Activated naive CD4-positive, alpha-beta T cell treated with anti-CD3 and anti-CD28 coated beads for 36 hours (primary cell): ENCODE measurements at regions of chr3 and their contacts with region 1.

Region 1: DNA sequence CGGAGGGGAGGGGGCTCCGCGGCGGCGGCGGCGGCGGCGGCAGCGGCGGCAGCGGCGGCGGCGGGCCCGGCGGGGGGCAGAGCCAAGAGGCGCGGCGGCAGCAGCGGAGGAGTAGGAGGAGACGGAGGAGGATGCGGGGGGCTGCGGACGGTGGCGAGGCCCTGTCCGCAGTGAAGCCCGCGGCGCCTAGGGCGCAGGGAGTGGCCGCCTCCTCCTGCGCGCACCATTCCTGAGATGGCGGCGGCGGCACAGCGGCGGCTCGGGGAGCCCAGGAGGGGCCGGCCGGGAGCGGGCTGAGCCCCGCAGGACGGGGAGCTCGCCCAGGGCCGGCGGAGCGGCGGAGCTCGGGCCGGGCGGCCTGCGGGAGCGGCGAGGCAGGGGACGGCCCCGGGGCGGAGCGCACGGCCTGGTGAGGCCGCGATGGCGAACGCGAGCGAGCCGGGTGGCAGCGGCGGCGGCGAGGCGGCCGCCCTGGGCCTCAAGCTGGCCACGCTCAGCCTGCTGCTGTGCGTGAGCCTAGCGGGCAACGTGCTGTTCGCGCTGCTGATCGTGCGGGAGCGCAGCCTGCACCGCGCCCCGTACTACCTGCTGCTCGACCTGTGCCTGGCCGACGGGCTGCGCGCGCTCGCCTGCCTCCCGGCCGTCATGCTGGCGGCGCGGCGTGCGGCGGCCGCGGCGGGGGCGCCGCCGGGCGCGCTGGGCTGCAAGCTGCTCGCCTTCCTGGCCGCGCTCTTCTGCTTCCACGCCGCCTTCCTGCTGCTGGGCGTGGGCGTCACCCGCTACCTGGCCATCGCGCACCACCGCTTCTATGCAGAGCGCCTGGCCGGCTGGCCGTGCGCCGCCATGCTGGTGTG is at the start of gene GPR27:
- DNase-seq: peak; percentile 22
- H3K4me3 Mint-ChIP-seq: peak within 1 kb of the TSS; percentile 64
- H3K27ac Mint-ChIP-seq: no peak within 1 kb of the TSS
- H3K4me1 Mint-ChIP-seq: peaks cover 7% of the 10 kb centered on the region
- H3K27me3 Mint-ChIP-seq: peaks cover 33% of the 10 kb centered on the region
- total RNA-seq, gene GPR27: 0.74 to 0.93 TPM

Region 2: GRCh38 chr3:71710906-71711494 is 42.9 kb before region 1 on chr3:
- CTCF ChIA-PET with region 1: interaction called, 8 read pairs
- intact Hi-C with region 1: loop called (anchors 5 kb)
- DNase-seq: no peak
- H3K4me3 Mint-ChIP-seq: no peak overlapping the region
- H3K27ac Mint-ChIP-seq: no peak overlapping the region
- H3K4me1 Mint-ChIP-seq: peaks cover 50% of the 10 kb centered on the region
- H3K27me3 Mint-ChIP-seq: no peaks in the 10 kb centered on the region

Region 3: GRCh38 chr3:71784914-71785531 is 31.2 kb after region 1 on chr3 and contains the start of gene PROK2:
- CTCF ChIA-PET with region 1: interaction called, 4 read pairs
- intact Hi-C with region 1: loop called (anchors 2 kb)
- DNase-seq: peak; percentile 63
- H3K4me3 Mint-ChIP-seq: peak within 1 kb of the TSS; percentile 73
- H3K27ac Mint-ChIP-seq: peak within 1 kb of the TSS; percentile 1
- H3K4me1 Mint-ChIP-seq: peaks cover 16% of the 10 kb centered on the region
- H3K27me3 Mint-ChIP-seq: peaks cover 47% of the 10 kb centered on the region
- total RNA-seq, gene PROK2: 0.15 TPM in 1 of 2 experiments, not detected in the other